Aorta (tissue), 5 donors: ENCODE measurements at regions of chr7 and their contacts with region 1.

Region 1: DNA sequence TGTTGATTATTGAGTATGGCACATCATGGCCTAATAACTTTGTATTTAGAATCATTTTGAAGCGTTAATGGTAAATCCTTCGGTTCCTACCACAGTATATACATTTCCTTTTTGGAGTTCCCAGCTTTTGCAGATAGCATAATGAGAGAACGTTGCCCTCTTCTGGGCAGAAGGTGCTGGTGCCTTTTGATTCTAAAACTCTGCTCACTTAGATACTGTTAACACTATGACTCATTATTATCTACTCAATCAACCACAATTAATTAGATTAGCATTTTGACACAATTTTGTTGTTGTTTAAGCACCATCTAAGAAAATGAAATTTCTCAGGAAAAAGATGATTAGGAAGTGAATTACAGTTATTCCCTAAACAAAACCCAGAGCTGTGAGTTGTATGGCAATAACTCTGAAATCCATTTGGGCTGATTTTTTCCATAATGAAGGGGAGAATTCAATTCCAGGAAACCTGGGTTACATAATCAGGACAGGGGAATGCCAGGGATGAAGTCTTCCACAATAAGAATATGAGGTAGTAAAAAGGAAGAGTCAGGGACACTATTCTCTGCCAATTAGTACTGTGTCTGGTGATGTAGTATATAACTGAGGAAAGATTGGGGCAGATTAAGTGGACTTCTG is 11.5 kb upstream of the DLD start:
- DNase-seq: no peak
- ATAC-seq: no peak
- H3K4me3 ChIP-seq: no peak overlapping the region
- H3K27ac ChIP-seq: no peak overlapping the region
- H3K4me1 ChIP-seq: no peaks in the 10 kb centered on the region
- H3K27me3 ChIP-seq: no peaks in the 10 kb centered on the region

Region 2: DNA sequence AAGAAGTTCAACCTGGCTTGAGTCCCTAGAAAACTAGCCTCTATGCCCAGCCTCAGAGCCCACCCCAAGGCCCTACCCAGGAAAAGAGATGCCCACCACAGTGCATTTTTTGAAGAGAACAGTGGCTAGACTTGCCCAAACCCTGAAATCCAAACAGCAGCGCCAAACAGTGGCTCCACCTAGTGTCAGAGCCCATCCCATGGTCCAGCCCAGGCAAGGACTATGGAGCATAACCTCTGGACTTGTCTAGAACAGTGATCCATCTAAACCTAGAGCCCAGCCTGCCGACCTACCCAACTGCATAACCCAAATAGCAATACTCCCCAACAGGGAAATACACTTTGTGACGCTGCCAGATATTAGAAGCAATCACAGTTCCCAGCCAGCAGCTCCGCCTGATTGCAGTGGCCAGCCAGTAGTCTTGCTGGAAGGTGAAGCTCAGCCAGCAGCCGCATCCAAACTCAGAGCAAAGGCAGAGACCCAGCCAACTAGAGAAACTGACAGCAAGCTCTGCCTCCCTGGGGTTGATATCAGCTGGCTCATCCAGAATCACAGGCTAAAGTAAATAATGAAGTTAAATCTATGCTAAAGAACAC is 666.2 kb before region 1 on chr7:
- intact Hi-C with region 1: no loop called
- DNase-seq: no peak
- ATAC-seq: peak; percentile 59
- H3K4me3 ChIP-seq: no peak overlapping the region
- H3K27ac ChIP-seq: no peak overlapping the region
- H3K4me1 ChIP-seq: no peaks in the 10 kb centered on the region
- H3K27me3 ChIP-seq: no peaks in the 10 kb centered on the region

Region 3: DNA sequence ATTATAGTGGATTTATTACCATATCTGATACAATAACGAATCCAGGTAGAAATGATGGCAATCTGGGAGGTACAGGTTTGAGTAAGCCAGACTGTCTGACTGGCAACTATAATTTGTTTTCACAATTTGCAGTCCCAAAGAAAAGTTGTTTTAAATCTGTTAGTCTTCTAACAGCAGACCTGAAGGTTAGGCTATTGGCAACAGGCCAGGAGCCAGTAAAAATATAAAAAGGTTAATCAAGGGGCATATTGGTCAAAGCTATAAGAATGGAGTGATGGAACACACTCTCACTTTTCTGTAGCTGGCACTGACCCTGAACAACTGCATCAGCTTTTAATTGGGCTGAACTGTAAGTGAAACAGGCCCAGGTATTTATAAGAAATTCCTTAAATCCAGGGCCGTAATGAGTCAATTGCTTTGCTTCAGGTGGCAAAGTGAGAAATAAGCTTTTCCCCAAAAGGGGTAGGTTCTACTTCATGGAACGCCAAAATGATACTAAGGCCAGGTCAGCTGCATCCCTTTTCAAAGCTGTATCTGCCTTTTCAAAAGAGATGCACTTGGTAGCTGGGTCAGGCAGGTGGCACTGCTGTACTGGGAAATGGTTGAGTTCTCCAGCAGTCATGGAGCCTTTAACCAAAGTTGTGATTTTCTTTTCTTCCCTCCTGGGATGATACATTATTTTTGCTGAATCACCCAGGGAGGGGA is 416.6 kb before region 1 on chr7:
- intact Hi-C with region 1: loop called (anchors 5 to 10 kb)
- DNase-seq: peak in 1 of 2 donors; percentile 57
- ATAC-seq: peak; percentile 90
- H3K4me3 ChIP-seq: no peak overlapping the region
- H3K27ac ChIP-seq: no peak overlapping the region
- H3K4me1 ChIP-seq: peaks cover 0 to 3% of the 10 kb centered on the region in 2 donors
- H3K27me3 ChIP-seq: no peaks in the 10 kb centered on the region

Region 4: DNA sequence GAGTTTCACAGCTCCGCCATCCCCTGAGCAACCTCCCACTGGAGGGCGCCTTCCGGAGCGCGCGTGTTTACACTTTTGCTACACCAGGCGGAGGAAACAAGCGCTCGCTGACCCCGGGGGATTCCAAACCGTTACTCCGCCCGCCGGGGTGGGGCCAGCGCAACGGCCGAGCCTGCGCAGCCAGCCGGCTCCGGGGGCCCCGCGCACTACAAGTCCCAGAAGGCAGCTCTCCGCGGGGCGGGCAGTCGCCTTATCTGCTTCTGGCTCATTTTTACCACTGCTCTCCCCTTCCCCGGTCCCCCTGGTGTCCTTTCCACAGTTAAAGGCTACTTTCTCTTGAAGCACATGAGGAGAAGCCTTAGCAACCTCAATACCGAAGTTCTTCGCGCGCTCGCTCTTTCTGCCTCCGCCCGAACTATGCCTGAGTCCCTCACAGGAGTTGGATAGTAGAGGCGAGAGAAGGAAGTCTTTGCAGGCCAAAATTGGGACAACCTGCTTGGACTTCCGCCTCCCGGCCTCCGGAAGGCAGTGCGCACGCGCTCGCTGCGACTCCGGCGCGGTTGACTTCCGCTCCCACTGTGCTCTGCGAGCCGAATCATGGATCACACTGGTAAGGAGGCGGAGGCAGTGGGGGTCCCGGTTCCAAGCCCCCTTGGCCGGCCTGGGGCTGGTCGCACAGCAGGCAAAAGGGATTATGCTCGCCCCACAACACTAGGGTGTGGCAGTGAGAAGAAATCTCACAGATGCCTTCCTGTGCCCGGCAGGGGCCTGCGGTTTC is 135.8 kb before region 1 on chr7 and contains the start of gene CBLL1:
- intact Hi-C with region 1: loop called (anchors 5 to 10 kb)
- DNase-seq: peak; percentile 98 to 99
- ATAC-seq: peak; percentile 100
- H3K4me3 ChIP-seq: peak within 1 kb of the TSS; percentile 57 to 81
- H3K27ac ChIP-seq: peak within 1 kb of the TSS; percentile 80 to 87
- H3K4me1 ChIP-seq: peaks cover 2 to 7% of the 10 kb centered on the region in 2 donors
- H3K27me3 ChIP-seq: no peaks in the 10 kb centered on the region
- total RNA-seq, gene CBLL1: 20.4 to 23.4 TPM

Region 5: DNA sequence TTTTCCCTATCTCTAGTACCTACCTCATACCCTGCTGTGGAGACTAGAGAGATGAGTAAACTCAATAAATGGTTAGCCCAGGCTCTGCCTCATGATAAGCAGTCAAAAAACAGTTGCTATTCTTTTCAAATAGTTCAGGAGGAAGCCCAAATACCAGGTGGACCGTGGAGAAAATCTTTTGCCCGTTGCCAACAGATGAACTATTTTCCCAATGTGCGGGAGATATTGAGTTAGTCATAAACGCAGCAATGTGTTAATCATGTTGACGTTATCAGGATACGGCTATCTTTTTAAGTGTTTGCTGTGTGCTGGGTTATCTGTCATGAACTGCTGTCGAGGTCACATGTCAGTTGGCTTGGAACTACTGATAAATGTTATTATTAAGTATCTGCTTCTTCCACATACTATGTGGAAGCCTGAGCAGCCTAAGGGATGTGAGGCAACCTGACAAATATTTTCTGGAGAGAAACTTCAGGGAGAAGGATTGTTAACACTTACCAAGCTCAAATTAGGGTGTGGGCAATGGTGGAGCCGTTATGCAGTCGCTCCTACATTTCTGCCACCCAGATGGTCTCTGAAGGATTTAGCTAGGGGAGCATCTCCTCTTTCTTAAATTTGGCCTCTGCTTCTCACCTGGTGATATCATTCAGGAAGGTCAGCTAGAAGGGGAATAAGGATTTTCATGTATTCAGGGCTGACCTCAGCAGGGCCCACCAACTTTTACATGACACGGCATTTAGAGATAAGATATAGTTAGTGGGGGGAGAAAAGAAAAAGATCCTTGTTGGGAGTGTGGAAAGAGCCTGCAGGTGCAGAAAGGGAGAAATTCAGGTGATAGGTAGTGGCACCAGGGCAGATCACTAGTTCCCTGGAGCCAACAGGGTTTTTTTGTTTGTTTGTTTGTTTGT is 43.0 kb before region 1 on chr7:
- intact Hi-C with region 1: no loop called
- DNase-seq: no peak
- ATAC-seq: no peak
- H3K4me3 ChIP-seq: no peak overlapping the region
- H3K27ac ChIP-seq: no peak overlapping the region
- H3K4me1 ChIP-seq: no peaks in the 10 kb centered on the region
- H3K27me3 ChIP-seq: no peaks in the 10 kb centered on the region

Region 6: GRCh38 chr7:108016841-108017775 is 137.6 kb after region 1 on chr7:
- intact Hi-C with region 1: loop called in 1 of 2 experiments (anchors 5 kb)
- DNase-seq: no peak
- ATAC-seq: no peak
- H3K4me3 ChIP-seq: no peak overlapping the region
- H3K27ac ChIP-seq: no peak overlapping the region
- H3K4me1 ChIP-seq: no peaks in the 10 kb centered on the region
- H3K27me3 ChIP-seq: no peaks in the 10 kb centered on the region